ENCODE measurements at regions of chr16 and their contacts with region 1.

Region 1: GRCh38 chr16:30984669-30985400 is at the start of gene HSD3B7:
- DNase-seq: peak; percentile 96
- ATAC-seq: peak; percentile 91
- total RNA-seq, gene HSD3B7: 7.0 TPM

Region 2: GRCh38 chr16:30941600-30942425 is 43.0 kb before region 1 on chr16:
- intact Hi-C with region 1: no loop called
- DNase-seq: peak; percentile 91
- ATAC-seq: peak; percentile 90

Region 3: DNA sequence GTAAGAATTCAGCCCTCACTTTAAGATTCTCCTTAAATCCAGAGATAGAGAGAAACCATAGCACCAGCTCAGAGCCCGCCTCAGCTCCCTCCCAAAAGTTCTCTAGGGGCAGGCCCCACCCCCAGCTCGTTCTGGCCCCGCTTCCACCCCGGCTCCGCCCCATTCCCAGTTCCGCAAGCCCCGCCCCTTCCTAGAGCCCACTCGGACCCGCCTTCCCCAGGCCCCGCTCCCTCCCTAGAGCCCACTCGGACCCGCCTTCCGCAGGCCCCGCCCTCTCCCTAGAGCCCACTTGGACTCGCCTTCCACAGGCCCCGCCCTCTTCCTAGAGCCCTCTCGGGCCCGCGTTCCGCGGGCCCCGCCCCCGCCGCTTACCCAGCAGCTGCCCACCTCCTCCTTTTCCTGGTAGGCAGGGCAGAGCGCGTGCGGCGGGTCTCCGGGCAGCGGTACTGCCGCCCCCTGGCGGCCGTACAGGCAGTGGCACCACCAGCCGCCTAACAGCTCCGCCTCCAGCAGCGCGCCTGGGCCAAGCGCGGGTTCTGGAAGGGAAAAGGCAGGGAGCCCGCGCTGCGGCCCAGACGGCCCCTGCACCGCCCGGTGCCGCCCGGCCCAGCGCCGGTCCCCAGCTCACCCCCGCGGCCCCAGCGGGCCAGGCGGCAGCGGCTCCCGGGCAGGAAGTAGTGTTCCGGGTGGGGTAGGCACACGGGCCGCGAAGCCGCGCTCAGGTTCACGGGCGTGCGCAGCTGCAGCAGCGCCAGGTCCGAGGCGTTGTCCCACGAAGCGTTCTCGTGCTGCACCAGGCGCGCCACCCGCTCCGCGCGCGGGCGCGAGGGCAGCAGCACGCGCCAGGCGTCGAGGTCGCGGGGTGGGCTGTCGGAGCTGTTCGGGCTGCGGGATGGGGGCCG is 157.5 kb after region 1 on chr16:
- intact Hi-C with region 1: loop called (anchors 1 kb)
- DNase-seq: peak; percentile 99
- ATAC-seq: peak; percentile 98

Region 4: DNA sequence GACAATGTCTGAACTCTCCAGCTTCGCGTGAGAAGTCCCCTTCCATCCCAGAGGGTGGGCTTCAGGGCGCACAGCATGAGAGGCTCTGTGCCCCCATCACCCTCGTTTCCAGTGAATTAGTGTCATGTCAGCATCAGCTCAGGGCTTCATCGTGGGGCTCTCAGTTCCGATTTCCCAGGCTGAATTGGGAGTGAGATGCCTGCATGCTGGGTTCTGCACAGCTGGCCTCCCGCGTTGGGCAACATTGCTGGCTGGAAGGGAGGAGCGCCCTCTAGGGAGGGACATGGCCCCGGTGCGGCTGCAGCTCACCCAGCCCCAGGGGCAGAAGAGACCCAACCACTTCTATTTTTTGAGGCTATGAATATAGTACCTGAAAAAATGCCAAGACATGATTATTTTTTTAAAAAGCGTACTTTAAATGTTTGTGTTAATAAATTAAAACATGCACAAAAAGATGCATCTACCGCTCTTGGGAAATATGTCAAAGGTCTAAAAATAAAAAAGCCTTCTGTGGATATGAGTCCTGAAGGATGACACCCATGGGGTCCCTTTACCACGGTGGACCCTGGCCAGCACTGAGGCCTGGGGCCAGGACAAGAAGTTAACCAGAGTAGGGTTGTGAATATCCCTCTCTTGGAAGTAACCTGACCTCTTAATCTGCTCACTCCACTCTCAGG is 397.8 kb after region 1 on chr16:
- intact Hi-C with region 1: loop called (anchors 5 kb)
- DNase-seq: peak; percentile 90
- ATAC-seq: peak; percentile 86

Region 5: GRCh38 chr16:31440516-31441184 is 455.8 kb after region 1 on chr16:
- intact Hi-C with region 1: loop called (anchors 1 kb)
- DNase-seq: no peak
- ATAC-seq: no peak

Region 6: DNA sequence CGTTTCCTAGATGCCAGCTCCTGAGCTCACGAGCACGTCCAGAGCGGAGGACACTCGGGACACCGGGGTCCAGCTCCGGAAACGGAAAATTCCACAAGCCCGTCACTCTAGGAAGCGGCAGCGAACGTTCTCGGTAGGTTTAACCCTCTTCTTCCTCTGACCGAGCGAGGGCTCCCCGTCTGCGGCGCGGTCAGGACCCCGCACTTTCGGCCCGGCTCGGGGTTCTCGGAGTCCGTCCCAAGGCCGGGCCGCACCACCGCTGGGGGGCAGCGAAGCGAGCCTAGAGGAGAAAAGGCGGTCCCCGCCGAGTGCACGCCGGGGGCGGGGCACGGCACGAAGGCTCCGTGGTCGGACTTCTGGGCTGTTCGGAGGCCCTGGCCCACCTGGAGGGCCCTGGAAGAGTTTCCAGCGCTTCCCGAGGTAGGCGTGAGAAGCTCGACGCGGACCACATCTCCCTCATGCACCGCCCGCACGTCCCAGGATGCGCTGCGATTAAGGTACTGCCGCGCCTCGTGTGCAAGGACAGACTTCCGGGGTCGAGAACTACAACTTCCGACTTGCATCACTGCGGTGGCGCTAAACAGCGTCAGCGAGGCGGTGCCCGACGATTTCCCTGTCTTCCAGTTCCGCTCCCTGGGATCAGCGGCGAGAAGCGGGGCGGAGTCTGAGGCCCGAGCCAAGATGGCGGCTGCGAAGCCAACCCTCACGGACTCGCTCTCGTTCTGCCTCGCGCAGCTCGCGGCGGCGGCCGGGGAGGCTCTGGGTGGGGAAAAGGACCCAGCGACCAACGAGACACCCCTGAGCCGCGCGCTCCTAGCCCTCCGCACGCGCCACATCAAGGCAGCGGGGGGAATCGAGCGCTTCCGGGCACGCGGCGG is 474.2 kb after region 1 on chr16 and contains the start of gene ARMC5:
- intact Hi-C with region 1: loop called (anchors 5 kb)
- DNase-seq: peak; percentile 98
- ATAC-seq: peak; percentile 89
- total RNA-seq, gene ARMC5: 5.5 TPM

Region 7: GRCh38 chr16:31868691-31869167 is 883.9 kb after region 1 on chr16:
- intact Hi-C with region 1: loop called (anchors 2 kb)
- DNase-seq: peak; percentile 84
- ATAC-seq: peak; percentile 55